PC-9 (cell line): ENCODE measurements at regions of chr1 and their contacts with region 1.

Region 1: GRCh38 chr1:212558693-212559480 is 49.7 kb upstream of the ATF3 start:
- DNase-seq: peak; percentile 58 to 86
- H3K4me3 ChIP-seq: peak overlapping the region; percentile 67
- H3K27ac ChIP-seq: peak overlapping the region; percentile 63
- H3K4me1 ChIP-seq: peaks cover 23% of the 10 kb centered on the region
- H3K27me3 ChIP-seq: no peaks in the 10 kb centered on the region
- CTCF ChIP-seq: no peak

Region 2: DNA sequence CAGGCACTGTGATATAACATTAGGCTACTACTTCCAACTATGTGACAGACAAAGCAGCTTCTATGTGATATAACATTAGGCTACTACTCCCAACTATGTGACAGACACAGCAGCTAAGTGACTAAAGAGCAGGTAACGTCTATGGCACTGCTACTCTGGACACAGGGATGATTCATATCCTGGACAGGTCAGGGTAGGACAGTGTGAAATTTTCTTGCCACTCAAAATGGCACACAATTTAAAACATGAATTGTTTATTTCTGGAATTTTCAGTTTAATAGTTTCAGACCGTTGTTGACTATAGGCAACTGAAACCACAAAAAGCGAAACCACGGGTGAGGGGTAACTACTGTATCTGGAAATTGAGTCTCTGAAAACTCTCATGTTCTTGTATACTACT is 518.3 kb before region 1 on chr1:
- CTCF ChIA-PET with region 1: no interaction called
- POLR2A ChIA-PET with region 1: interaction called, 13 read pairs
- intact Hi-C with region 1: no loop called
- DNase-seq: no peak
- H3K4me3 ChIP-seq: no peak overlapping the region
- H3K27ac ChIP-seq: peak overlapping the region; percentile 22; the same call in 1 of the 2 replicates
- H3K4me1 ChIP-seq: peaks cover 19% of the 10 kb centered on the region
- H3K27me3 ChIP-seq: no peaks in the 10 kb centered on the region
- CTCF ChIP-seq: no peak

Region 3: GRCh38 chr1:212485895-212486590 is 72.8 kb before region 1 on chr1:
- CTCF ChIA-PET with region 1: no interaction called
- POLR2A ChIA-PET with region 1: interaction called, 41 read pairs
- intact Hi-C with region 1: loop called (anchors 1 kb)
- DNase-seq: peak; percentile 95 to 100
- H3K4me3 ChIP-seq: no peak overlapping the region
- H3K27ac ChIP-seq: peak overlapping the region; percentile 81
- H3K4me1 ChIP-seq: peaks cover 74% of the 10 kb centered on the region
- H3K27me3 ChIP-seq: no peaks in the 10 kb centered on the region
- CTCF ChIP-seq: no peak

Region 4: GRCh38 chr1:212514056-212514614 is 44.8 kb before region 1 on chr1:
- CTCF ChIA-PET with region 1: no interaction called
- POLR2A ChIA-PET with region 1: interaction called, 9 read pairs
- intact Hi-C with region 1: loop called (anchors 1 kb)
- DNase-seq: peak; percentile 83 to 96
- H3K4me3 ChIP-seq: peak overlapping the region; percentile 25; the same call in 1 of the 2 replicates
- H3K27ac ChIP-seq: peak overlapping the region; percentile 76
- H3K4me1 ChIP-seq: peaks cover 28% of the 10 kb centered on the region
- H3K27me3 ChIP-seq: no peaks in the 10 kb centered on the region
- CTCF ChIP-seq: no peak; the same call in 1 of the 2 replicates

Region 5: GRCh38 chr1:212743901-212744475 is 185.1 kb after region 1 on chr1:
- CTCF ChIA-PET with region 1: no interaction called
- POLR2A ChIA-PET with region 1: interaction called, 16 read pairs
- intact Hi-C with region 1: no loop called
- DNase-seq: no peak
- H3K4me3 ChIP-seq: no peak overlapping the region
- H3K27ac ChIP-seq: no peak overlapping the region
- H3K4me1 ChIP-seq: no peaks in the 10 kb centered on the region
- H3K27me3 ChIP-seq: no peaks in the 10 kb centered on the region
- CTCF ChIP-seq: no peak